ENCODE measurements at regions of chr1 and their contacts with region 1.

Region 1: DNA sequence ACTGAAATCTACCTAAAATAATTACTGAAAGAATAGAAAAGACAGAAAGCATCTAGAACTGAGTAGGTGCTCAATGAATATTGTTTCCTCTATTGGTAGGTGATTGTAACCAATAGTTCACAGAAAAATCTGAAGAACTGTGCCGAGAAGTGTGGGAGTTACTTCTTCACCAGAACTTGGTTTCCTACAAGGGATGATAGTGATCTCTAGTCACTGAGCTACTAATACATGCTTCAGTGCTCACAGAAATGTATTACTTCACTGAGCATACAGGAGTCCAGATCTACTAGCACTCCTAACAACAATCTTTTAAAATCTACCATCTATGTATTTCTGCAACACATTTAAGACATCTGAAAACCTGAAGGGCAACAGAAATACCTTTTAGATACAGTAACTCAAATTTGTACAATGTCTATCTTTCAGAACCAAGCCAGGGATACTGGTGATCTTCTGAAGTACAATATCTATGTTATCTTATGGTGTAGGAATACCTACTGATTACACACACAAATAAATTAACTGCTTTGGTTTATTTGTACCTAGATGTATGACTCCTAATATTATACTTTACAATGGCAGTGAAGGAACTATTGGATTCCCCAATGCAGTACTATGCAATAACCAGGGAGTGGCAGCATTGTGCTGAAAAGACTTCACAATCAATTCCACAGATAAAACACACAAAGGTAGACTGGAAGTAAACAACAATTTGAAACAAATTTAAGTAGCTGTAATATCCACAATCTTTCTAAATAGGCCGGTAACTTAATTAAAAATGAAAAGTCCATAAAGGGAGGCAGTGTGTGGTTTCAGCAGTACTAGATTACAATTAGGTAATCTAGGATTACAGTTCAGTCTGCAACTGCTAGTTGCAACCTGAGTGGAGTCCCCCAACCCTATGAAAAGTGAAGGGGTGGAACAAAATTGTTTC is 243.0 kb downstream of the SLC45A1 start:
- DNase-seq: no peak
- H3K4me3 ChIP-seq: no peak overlapping the region
- H3K27ac ChIP-seq: no peak overlapping the region
- H3K4me1 ChIP-seq: peaks cover 27% of the 10 kb centered on the region
- H3K27me3 ChIP-seq: no peaks in the 10 kb centered on the region
- CTCF ChIP-seq: peak; percentile 98

Region 2: DNA sequence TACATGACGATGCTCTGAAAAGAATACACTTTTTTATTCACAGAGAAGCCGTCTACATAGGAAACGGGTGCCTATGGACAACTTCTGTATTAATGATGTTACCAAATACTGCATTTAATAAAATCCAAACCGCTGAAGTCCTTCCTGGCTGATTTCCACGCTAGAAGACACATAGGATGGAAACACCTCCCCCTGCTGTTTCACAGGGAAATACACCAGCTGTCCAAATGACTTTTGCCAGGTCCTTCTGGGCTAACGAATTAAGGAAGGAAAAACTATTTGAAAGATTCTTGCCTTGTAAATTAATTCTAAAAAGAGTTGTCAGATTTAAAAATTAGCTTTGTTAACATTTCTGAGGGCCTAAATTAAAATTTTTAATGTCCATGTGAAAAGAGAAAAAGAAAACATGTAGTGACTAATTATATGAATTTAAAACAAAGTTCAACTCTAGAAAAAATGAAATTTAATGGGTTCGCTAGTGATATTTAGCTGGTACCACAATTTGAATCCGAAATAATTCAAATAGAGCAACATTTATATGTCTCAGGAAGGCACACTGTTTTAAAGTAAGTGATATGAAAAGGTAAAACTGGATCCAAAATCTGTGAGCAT is 110.5 kb after region 1 on chr1:
- intact Hi-C with region 1: loop called (anchors 5 kb)
- DNase-seq: no peak
- H3K4me3 ChIP-seq: no peak overlapping the region
- H3K27ac ChIP-seq: peak overlapping the region; percentile 37
- H3K4me1 ChIP-seq: peaks cover 65% of the 10 kb centered on the region
- H3K27me3 ChIP-seq: no peaks in the 10 kb centered on the region
- CTCF ChIP-seq: peak; percentile 91

Region 3: DNA sequence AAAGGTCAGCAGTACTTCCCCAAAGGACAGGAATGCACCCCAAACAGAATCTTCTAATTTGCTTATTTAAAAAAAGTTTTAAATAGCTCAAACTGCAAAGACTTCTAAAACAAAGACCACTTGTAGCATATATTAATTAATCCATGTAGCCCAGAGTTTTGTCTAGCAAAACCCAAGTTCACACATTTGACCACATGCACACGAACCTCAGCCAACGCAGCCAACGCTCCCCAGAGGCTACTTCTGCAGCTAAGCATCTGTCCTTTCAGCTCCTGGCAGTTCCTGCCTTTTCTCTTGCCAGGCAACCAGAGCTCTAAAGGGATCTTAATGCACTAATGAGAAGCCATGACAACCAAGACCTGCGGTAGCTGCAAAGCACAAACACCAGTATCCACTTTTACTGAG is 166.9 kb after region 1 on chr1:
- intact Hi-C with region 1: loop called (anchors 2 kb)
- DNase-seq: peak; percentile 44
- H3K4me3 ChIP-seq: no peak overlapping the region
- H3K27ac ChIP-seq: no peak overlapping the region
- H3K4me1 ChIP-seq: peaks cover 30% of the 10 kb centered on the region
- H3K27me3 ChIP-seq: no peaks in the 10 kb centered on the region
- CTCF ChIP-seq: no peak

Measured in left ventricle myocardium inferior (tissue), 1 donor.